ENCODE measurements at regions of chr1 and their contacts with region 1.

Region 1: GRCh38 chr1:57157818-57158603 is 192.2 kb upstream of the C8B start:
- DNase-seq: no peak
- H3K4me3 ChIP-seq: no peak overlapping the region
- H3K27ac ChIP-seq: no peak overlapping the region
- H3K4me1 ChIP-seq: no peaks in the 10 kb centered on the region
- H3K27me3 ChIP-seq: no peaks in the 10 kb centered on the region
- CTCF ChIP-seq: no peak
- POLR2A ChIP-seq: no peak

Region 2: DNA sequence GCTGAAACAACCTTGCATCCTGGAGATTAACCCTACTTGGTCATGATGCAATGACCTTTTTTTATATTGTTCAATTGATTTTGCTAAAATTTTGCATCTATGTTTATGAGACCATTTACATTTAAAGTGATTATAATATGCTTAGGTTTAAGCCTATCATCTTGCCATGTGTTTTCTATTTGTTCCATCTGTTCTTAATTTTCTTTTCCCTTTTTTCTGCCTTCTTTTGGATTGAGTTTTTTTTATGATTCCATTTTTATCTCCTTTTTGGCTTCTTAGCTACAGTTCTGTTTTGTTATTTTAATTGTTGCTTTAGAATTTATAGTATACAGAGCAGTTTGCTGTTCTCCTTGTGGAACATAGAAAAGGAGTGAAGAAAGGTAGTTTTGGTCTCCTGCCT is 1557.8 kb before region 1 on chr1:
- intact Hi-C with region 1: no loop called
- DNase-seq: no peak
- H3K4me3 ChIP-seq: no peak overlapping the region
- H3K27ac ChIP-seq: peak overlapping the region in 1 of 2 donors; percentile 3
- H3K4me1 ChIP-seq: no peaks in the 10 kb centered on the region
- H3K27me3 ChIP-seq: no peaks in the 10 kb centered on the region
- CTCF ChIP-seq: no peak
- POLR2A ChIP-seq: no peak

Region 3: DNA sequence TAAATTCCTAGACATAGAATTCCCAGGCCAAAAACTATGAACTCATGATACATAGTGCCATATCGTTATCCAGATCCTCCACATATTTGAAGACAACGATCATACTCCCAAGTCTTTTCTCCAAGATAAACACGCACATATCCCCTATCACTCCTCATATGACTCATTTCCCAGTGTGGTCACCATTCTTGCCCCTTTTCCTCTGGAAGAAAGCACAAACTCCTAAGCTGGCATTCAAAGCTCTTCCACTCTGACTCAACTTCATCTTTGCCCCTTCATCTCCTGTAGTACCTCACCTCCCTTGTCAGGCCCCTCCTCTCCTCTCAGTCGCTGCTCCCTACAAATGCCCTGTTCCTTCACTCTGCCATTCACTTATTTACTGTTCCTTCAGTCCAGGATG is 856.2 kb before region 1 on chr1:
- intact Hi-C with region 1: no loop called
- DNase-seq: no peak
- H3K4me3 ChIP-seq: no peak overlapping the region
- H3K27ac ChIP-seq: no peak overlapping the region
- H3K4me1 ChIP-seq: no peaks in the 10 kb centered on the region
- H3K27me3 ChIP-seq: no peaks in the 10 kb centered on the region
- CTCF ChIP-seq: no peak
- POLR2A ChIP-seq: no peak

Region 4: GRCh38 chr1:56745231-56745630 is 412.8 kb before region 1 on chr1:
- intact Hi-C with region 1: loop called (anchors 5 kb)
- DNase-seq: no peak
- H3K4me3 ChIP-seq: no peak overlapping the region
- H3K27ac ChIP-seq: no peak overlapping the region
- H3K4me1 ChIP-seq: no peaks in the 10 kb centered on the region
- H3K27me3 ChIP-seq: no peaks in the 10 kb centered on the region
- CTCF ChIP-seq: no peak
- POLR2A ChIP-seq: no peak

Region 5: GRCh38 chr1:58308206-58308605 is 1150.2 kb after region 1 on chr1:
- intact Hi-C with region 1: no loop called
- DNase-seq: no peak
- H3K4me3 ChIP-seq: no peak overlapping the region
- H3K27ac ChIP-seq: no peak overlapping the region
- H3K4me1 ChIP-seq: no peaks in the 10 kb centered on the region
- H3K27me3 ChIP-seq: no peaks in the 10 kb centered on the region
- CTCF ChIP-seq: no peak
- POLR2A ChIP-seq: no peak

Measured in breast epithelium (tissue), 4 donors.